Activated T-helper 1 cell treated with anti-CD3 and anti-CD28 coated beads, Interleukin-12 subunit alpha, Interleukin-12 subunit beta, Interleukin-2, Interleukin-4 antibody, amounts not matched to agents 30 ng/mL and 10 ng/mL and 1 ng/mL, durations not matched to agents 14 hours and 24 hours and 36 hours (primary cell): ENCODE measurements at regions of chr20 and their contacts with region 1.

Region 1: DNA sequence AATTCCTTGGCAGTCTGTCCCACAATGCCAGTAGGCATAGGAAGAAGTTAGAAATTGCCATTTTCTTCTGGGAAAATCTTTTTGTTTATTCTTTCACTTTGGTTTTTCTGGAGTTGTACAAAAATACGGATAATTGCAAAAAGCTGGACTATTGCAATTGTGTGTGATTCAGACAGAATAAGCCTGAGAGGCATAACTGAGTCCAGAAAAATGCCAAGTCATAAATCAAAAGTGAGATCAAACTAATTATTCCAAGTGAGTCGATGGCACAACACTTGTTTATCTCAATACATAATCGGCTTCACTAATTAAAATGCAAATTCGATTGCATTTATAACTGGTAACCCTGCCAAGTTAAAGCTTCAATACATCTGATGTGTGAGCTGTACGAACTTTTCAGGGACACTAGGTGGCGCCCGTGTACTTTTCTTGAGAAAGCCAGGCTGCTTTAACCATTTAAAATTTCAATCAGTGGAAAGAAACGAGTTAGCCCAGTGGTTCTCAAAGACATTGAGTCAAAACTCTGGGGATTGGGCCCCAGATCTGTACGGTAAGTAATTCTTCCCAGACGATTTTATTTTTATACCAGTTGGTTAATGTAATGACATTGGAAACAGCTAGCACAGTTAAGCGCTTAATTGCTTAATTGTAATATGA is 102.6 kb downstream of the LAMP5 start:
- DNase-seq: peak; percentile 6
- H3K4me3 Mint-ChIP-seq: no peak overlapping the region
- H3K27ac Mint-ChIP-seq: no peak overlapping the region
- H3K4me1 Mint-ChIP-seq: no peaks in the 10 kb centered on the region
- H3K27me3 Mint-ChIP-seq: no peaks in the 10 kb centered on the region

Region 2: DNA sequence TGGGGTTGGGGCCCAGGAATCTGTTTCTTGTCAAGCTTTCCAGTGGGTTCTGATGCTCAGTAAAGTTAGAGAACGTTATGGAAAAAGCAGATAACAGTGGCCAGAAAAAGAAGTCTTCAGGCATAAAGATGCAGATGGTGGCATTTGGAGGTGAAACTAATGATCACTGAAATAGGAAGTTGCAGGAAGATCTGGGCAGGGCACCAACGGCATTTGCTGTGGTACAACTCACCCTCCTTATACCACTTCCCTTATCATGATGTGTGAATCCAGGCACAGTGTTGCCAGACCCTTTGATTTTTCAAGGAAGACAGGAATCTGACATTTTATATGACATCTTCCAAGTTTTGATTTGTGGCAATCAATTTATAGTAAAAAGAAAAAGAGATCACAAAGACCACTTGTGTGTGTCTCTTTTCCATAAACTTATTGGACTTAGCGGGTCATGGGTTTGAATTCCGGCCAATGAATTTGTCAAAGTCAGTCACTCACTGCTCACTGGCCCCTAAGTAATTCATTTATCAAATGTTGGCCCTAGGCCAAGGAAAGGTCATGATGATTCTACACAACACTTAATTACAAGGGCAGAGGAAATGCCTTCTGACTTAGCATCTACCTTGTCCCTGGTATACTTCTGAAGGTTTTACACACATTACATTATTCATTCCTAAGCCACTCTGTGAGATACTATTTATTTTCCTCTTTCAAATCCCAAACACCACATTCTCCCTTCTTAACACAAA is 65.0 kb before region 1 on chr20:
- intact Hi-C with region 1: no loop called
- DNase-seq: no peak
- H3K4me3 Mint-ChIP-seq: no peak overlapping the region
- H3K27ac Mint-ChIP-seq: no peak overlapping the region
- H3K4me1 Mint-ChIP-seq: no peaks in the 10 kb centered on the region
- H3K27me3 Mint-ChIP-seq: no peaks in the 10 kb centered on the region

Region 3: DNA sequence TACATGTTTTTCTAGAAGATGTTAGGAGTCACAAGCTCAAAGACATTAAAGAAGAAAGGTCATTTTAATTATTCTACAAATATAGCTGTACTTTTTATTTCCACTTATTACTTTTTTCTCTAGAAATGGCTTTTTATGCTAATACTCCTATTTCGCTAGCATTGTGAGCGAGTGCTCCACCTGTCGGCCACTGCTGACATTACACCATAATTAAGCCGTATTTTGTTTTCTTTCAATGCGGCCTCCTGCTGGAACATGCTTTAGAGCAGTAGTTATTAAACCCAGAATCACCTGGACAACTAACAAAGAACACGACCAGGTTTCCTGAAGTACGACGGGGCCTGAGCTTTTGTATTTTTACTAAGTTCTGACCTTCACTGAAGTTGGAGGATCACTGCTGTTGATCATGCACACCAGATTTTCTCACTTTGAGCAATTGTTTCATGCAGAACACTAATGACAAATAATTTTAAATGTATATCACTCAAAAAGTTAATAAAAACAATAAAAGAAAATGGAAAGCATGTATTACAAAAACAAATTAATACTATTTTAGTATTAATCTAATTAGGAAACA is 296.0 kb after region 1 on chr20:
- intact Hi-C with region 1: loop called (anchors 1 kb)
- DNase-seq: no peak
- H3K4me3 Mint-ChIP-seq: no peak overlapping the region
- H3K27ac Mint-ChIP-seq: no peak overlapping the region
- H3K4me1 Mint-ChIP-seq: no peaks in the 10 kb centered on the region
- H3K27me3 Mint-ChIP-seq: peaks cover 4% of the 10 kb centered on the region

Region 4: GRCh38 chr20:10090588-10091166 is 473.7 kb after region 1 on chr20:
- intact Hi-C with region 1: loop called (anchors 5 kb)
- DNase-seq: no peak
- H3K4me3 Mint-ChIP-seq: no peak overlapping the region
- H3K27ac Mint-ChIP-seq: no peak overlapping the region
- H3K4me1 Mint-ChIP-seq: no peaks in the 10 kb centered on the region
- H3K27me3 Mint-ChIP-seq: peaks cover 3% of the 10 kb centered on the region

Region 5: GRCh38 chr20:10427060-10427692 is 810.2 kb after region 1 on chr20:
- intact Hi-C with region 1: loop called (anchors 5 kb)
- DNase-seq: no peak
- H3K4me3 Mint-ChIP-seq: no peak overlapping the region
- H3K27ac Mint-ChIP-seq: no peak overlapping the region
- H3K4me1 Mint-ChIP-seq: peaks cover 10% of the 10 kb centered on the region
- H3K27me3 Mint-ChIP-seq: no peaks in the 10 kb centered on the region